ENCODE measurements at regions of chr6 and their contacts with region 1.

Region 1: GRCh38 chr6:108558372-108559096 is 2.2 kb upstream of the FOXO3 start:
- DNase-seq: peak; percentile 95
- ATAC-seq: peak; percentile 72
- H3K4me3 Mint-ChIP-seq: peak overlapping the region; percentile 92
- H3K27ac Mint-ChIP-seq: peak overlapping the region; percentile 92
- H3K4me1 Mint-ChIP-seq: peaks cover 21% of the 10 kb centered on the region
- H3K27me3 Mint-ChIP-seq: peaks cover 24% of the 10 kb centered on the region

Region 2: DNA sequence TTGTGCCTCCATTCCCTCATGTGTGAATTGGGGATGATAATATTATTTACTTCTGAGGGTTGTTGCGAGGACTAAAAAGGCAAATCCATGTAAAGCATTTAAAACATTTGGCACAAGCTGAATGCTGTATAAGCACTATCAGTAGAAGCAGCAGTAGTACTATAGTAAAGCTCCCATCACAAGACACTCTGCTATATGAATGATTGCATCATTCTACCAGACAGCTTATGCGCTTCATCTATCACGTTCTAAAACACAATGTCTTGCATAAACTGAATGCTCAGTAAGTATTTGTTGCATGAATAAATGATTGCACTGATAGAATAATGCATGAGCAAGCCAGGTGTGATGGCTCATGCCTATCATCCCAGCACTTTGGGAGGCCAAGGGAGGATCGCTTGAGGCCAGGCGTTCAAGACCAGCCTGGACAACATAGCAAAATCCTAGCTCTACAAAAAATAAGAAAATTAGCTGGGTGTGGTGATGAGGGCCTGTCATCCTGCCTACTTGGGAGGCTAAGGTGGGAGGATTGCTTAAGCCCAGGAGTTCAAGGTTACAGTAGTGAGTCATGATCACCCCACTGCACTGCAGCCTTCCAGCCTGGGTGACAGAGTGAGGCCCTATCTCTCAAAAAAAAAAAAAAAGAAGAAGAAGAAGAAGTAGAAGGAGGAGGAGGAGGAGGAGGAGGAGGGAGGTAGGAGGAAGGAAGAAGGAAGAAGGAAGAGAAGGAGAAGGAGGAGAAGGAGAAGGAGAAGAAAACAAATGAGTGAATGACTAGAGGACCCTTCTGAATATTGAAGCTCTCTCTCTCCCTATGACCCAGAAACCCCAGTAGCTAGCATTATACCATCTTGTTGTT is 47.8 kb before region 1 on chr6:
- POLR2A ChIA-PET with region 1: no interaction called
- DNase-seq: no peak
- ATAC-seq: no peak
- H3K4me3 Mint-ChIP-seq: no peak overlapping the region
- H3K27ac Mint-ChIP-seq: no peak overlapping the region
- H3K4me1 Mint-ChIP-seq: no peaks in the 10 kb centered on the region
- H3K27me3 Mint-ChIP-seq: no peaks in the 10 kb centered on the region

Region 3: DNA sequence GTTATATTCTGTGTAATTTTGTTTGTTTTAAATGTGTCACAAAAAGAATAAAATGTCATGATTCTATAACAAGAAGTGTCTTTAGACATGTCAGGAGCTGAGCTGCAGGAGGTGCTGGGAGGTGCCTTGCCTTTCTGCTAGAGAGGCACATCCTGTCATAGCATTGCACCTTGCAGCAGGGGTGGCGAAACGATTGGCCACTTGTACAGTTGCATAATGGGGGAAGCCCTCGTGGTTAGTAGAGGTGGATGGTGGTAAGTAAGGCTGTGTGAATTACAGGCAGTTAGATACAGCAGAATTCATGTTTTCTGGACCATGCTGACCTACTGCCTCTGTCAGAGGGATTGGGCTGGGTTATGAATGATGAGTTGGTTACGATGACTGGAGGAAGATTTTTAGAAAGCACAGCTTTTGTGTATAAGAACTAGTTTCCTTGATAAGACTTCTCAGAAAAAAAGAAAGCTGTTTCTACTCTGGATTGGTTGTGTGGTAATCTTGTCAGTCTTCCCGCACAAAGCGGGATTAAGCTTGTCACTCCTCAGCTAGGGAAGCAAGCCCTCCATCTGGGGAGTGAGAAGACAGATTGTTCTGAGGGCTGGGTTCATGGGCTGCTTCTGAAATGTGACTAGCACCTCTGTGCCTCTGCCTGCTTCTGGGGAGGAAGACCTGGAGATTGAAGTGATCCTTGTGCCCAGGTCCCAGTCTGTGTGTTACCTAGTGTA is 77.1 kb after region 1 on chr6:
- POLR2A ChIA-PET with region 1: no interaction called
- DNase-seq: peak; percentile 48
- ATAC-seq: peak; percentile 99
- H3K4me3 Mint-ChIP-seq: peak overlapping the region; percentile 48
- H3K27ac Mint-ChIP-seq: peak overlapping the region; percentile 74
- H3K4me1 Mint-ChIP-seq: peaks cover 27% of the 10 kb centered on the region
- H3K27me3 Mint-ChIP-seq: peaks cover 3% of the 10 kb centered on the region

Region 4: DNA sequence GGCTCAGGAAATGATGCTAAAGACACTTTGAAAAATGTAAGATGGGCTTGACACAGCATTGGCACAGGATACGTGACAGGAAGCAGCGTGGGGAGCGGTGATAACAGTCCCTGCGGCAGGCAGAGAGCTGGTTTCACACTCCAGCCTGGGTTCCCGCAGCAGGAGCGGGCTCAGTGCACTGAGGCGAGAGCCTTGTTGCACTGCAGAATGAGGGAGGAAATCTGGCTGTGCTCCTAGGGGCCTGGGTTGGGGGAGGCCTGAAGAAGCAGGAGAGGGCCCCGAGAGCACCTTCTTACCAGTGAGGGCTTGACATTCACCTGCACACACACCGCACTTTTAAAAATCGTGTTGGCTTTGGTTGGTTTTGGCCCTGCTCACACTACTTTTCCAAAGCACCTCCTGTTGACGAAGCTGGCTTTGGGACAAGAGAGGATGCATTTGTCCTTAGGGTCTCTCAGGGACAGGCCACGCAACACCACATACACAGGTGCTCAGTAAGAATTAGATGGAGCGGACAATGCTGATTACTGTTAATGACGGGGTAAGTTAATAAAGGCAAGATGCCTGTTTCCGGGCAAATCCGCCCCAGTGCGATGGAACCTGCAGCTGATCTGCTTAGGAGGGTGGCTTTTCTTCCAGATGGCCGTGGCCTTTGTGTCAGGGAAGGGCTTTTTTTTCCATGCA is 240.3 kb after region 1 on chr6:
- POLR2A ChIA-PET with region 1: interaction called, 14 read pairs
- DNase-seq: peak; percentile 67
- ATAC-seq: peak; percentile 100
- H3K4me3 Mint-ChIP-seq: peak overlapping the region; percentile 81
- H3K27ac Mint-ChIP-seq: peak overlapping the region; percentile 95
- H3K4me1 Mint-ChIP-seq: peaks cover 38% of the 10 kb centered on the region
- H3K27me3 Mint-ChIP-seq: peaks cover 4% of the 10 kb centered on the region

Region 5: DNA sequence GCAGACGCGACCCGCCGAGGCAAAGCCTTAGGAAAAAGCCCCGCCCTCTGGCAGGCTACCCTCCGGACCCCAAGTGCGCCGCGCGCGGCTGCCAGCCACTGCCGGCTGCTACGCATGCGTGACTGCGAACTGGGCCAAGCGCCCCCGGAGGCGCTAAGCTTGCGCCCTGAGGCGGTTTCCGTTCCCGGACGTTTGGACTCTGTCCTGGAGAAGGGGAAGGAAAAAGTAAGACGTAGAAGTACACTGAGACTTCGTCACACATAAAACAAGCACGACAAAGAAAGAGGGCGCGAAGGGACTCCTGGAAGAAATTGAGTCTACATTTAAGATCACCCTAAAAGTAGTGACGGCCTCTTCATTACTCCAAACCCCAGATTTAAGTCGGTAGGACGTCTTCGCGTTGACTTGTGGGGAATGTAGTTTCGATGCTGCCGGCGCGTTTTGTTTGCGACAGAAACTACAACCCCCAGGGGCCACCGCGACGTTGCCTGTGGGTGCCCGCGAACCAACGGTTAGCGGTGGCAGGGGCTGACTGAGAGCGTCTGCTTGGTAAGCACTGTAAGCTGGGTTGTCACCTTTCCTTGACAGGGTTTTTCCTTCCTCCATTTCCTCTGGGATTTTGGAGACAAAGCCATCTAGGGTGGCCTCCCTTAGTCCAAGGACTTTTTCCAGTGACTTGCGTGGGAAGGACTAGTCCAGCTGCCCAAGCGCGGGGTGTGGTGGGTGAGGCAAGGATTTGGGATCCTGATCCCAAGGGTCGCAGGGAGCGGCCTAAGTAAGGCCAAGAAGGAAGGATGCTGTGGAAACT is 536.7 kb after region 1 on chr6 and contains the start of gene CEP57L1:
- POLR2A ChIA-PET with region 1: interaction called, 18 read pairs
- DNase-seq: peak; percentile 95
- ATAC-seq: peak; percentile 81
- H3K4me3 Mint-ChIP-seq: peak within 1 kb of the TSS; percentile 95
- H3K27ac Mint-ChIP-seq: peak within 1 kb of the TSS; percentile 99
- H3K4me1 Mint-ChIP-seq: peaks cover 45% of the 10 kb centered on the region
- H3K27me3 Mint-ChIP-seq: no peaks in the 10 kb centered on the region
- total RNA-seq, gene CEP57L1: 20.5 to 22.6 TPM

Region 6: DNA sequence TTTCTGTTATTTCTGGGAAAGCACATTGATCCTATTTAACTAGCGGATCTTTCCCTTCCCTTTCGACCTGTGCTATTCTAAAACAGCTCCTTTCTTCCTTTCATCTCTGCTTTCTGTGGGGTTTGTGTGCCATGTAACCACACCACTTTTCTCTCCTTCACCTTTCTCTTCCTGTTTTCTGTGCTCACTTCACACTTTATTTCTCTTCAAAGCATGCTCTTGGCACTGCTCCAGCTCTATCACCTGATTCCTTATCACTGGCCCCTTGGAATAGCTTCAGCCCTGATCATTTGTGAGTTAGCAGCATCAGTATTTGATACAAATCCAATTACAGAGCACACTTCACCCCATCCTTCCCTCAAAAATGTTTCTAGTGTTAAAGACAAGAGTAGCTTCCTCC is 1807.7 kb after region 1 on chr6:
- POLR2A ChIA-PET with region 1: no interaction called
- DNase-seq: no peak
- ATAC-seq: no peak
- H3K4me3 Mint-ChIP-seq: peak overlapping the region; percentile 20
- H3K27ac Mint-ChIP-seq: no peak overlapping the region
- H3K4me1 Mint-ChIP-seq: peaks cover 13% of the 10 kb centered on the region
- H3K27me3 Mint-ChIP-seq: no peaks in the 10 kb centered on the region